ENCODE measurements at regions of chr1 and their contacts with region 1.

Region 1: GRCh38 chr1:193275773-193276172 is 89.4 kb upstream of the B3GALT2 start:
- DNase-seq: peak; percentile 21 to 70
- H3K4me3 ChIP-seq: no peak overlapping the region
- H3K27ac ChIP-seq: no peak overlapping the region
- H3K4me1 ChIP-seq: no peaks in the 10 kb centered on the region
- H3K27me3 ChIP-seq: no peaks in the 10 kb centered on the region
- CTCF ChIP-seq: peak; percentile 50 to 57 (median 57)
- EP300 ChIP-seq: no peak
- POLR2A ChIP-seq: no peak
- RAD21 ChIP-seq: peak; percentile 48 to 54

Region 2: DNA sequence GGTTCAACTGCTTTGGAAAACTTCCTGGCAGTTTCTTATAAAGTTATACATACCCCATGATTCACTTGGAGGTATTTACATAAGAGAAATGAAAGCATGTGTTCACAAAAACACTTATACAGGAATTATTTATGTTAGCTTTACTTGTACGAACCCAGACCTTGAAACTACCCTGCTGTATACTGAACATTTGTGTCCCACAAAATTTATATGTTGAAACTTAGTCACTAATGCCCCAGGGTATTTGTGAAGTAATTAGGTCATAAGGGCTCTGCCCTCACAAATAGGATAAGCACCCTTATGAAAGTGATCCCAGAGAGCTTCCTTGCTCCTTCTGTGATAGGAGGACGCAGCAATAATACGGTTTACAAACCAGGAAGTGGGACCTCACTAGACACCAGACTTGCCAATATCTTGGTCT is 46.6 kb before region 1 on chr1:
- CTCF ChIA-PET with region 1: no interaction called
- POLR2A ChIA-PET with region 1: no interaction called
- DNase-seq: no peak
- H3K4me3 ChIP-seq: no peak overlapping the region
- H3K27ac ChIP-seq: no peak overlapping the region
- H3K4me1 ChIP-seq: no peaks in the 10 kb centered on the region
- H3K27me3 ChIP-seq: no peaks in the 10 kb centered on the region
- CTCF ChIP-seq: no peak
- EP300 ChIP-seq: no peak
- POLR2A ChIP-seq: no peak
- RAD21 ChIP-seq: no peak

Region 3: GRCh38 chr1:193256019-193256418 is 19.8 kb before region 1 on chr1:
- CTCF ChIA-PET with region 1: interaction called, 11 read pairs
- POLR2A ChIA-PET with region 1: interaction called, 4 read pairs
- DNase-seq: no peak
- H3K4me3 ChIP-seq: no peak overlapping the region
- H3K27ac ChIP-seq: no peak overlapping the region
- H3K4me1 ChIP-seq: 0 out of 7 replicates have a peak, but pooled peaks cover 0 to 2% (median 0%) of the 10 kb centered on the region in 4 experiments
- H3K27me3 ChIP-seq: no peaks in the 10 kb centered on the region
- CTCF ChIP-seq: no peak
- EP300 ChIP-seq: no peak
- POLR2A ChIP-seq: no peak
- RAD21 ChIP-seq: no peak

Region 4: GRCh38 chr1:193299038-193299437 is 23.3 kb after region 1 on chr1:
- CTCF ChIA-PET with region 1: interaction called, 10 read pairs
- POLR2A ChIA-PET with region 1: no interaction called
- DNase-seq: no peak
- H3K4me3 ChIP-seq: no peak overlapping the region
- H3K27ac ChIP-seq: no peak overlapping the region
- H3K4me1 ChIP-seq: no peaks in the 10 kb centered on the region
- H3K27me3 ChIP-seq: no peaks in the 10 kb centered on the region
- CTCF ChIP-seq: no peak
- EP300 ChIP-seq: no peak
- POLR2A ChIP-seq: no peak
- RAD21 ChIP-seq: no peak